ENCODE measurements at regions of chr12 and their contacts with region 1.

Region 1: DNA sequence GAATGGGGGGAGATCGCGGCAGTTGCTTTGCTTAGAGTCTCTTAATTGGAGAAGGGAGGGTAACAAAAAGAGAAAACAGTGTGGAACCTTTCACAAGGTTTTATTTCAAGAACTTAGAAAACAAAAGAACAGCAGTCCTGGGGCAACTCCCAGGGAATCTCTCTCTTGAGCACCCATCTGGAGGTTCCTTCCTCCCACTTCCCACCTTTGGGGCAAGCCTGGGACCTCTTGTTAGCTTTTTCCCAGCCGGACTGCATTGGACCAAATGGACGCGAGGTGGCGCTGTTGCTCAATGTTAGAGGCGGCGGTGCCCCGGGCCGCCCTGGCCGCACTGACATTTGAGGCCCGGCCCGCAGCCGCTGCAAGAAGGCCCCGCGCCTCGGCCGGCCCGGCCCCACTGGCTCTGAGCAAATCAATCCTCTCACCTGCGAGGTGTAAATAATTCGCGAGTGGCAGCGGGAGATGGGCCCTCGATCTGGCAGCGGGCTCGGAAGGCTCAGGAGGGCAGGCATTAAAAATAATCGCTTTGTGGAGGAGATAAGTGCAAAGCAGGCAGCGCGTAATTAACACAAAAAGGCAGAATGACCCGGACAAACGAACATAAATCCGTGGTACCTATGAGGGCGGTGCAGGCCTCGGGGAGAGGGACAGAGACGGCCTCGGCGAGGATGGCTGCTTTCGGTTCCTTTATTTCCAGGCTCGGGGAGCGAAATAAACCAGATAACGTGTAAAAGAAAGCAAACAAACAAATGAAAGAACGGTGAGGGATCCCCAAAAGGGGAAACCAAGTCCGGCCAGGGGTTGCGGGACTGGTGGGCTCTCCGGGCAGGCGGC is 2.7 kb upstream of the HOXC8 start:
- DNase-seq: peak; percentile 86 to 89 (median 88)
- ATAC-seq: peak; percentile 92 to 97 (median 95)
- H3K4me3 ChIP-seq: peak overlapping the region in 1 of 3 donors; percentile 11
- H3K27ac ChIP-seq: no peak overlapping the region
- H3K4me1 ChIP-seq: peaks cover 0 to 7% (median 0%) of the 10 kb centered on the region in 4 donors
- H3K27me3 ChIP-seq: peaks cover 0 to 41% of the 10 kb centered on the region in 2 donors
- CTCF ChIP-seq: peak; percentile 95 to 97 (median 95)
- POLR2A ChIP-seq: no peak

Region 2: DNA sequence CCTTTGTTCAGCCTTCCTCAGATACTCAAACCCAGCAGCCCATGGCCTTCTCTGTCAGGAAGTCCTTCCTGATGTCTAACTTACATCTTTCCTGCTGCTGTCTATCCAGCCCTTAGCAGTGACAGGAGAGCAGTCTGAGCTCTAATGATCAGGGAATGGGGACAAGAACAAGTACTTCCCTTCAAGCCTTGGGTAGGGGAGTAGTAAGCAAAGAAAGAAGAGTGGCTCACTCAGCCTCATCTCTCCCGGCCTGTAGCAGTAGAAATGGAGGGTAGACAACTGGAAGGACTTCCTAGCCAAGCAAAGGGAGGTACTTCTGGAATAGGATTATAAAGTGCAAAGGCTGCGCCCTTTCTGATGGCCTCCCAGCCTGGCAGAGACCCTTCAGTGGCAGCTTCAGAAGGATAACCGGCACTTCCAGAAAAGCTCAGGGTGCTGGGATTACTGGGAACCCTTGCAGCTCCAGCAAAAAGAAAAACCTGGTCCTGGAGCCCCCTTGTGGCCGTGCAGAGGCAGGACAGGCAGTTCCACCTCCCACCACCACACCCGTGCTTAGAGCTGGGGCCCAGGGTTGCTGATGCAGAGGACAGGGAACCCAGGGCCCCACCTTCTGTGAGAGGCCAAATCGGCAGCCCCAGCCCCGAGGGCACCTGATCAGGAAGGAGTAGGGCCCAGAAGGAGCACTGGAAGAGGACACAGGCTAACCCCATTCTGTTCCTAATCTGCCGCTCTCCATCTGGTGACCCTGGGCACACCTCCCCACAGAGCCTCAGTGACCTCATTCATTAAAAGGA is 195.1 kb after region 1 on chr12:
- intact Hi-C with region 1: loop called (anchors 5 kb)
- DNase-seq: peak; percentile 64 to 68 (median 68)
- ATAC-seq: peak; percentile 88 to 95 (median 94)
- H3K4me3 ChIP-seq: no peak overlapping the region
- H3K27ac ChIP-seq: no peak overlapping the region
- H3K4me1 ChIP-seq: no peaks in the 10 kb centered on the region
- H3K27me3 ChIP-seq: peaks cover 0 to 9% of the 10 kb centered on the region in 2 donors
- CTCF ChIP-seq: peak; percentile 86 to 97 (median 94)
- POLR2A ChIP-seq: no peak

Measured in right lobe of liver (tissue), 6 donors.